HEK293T (cell line): ENCODE measurements at regions of chr5 and their contacts with region 1.

Region 1: DNA sequence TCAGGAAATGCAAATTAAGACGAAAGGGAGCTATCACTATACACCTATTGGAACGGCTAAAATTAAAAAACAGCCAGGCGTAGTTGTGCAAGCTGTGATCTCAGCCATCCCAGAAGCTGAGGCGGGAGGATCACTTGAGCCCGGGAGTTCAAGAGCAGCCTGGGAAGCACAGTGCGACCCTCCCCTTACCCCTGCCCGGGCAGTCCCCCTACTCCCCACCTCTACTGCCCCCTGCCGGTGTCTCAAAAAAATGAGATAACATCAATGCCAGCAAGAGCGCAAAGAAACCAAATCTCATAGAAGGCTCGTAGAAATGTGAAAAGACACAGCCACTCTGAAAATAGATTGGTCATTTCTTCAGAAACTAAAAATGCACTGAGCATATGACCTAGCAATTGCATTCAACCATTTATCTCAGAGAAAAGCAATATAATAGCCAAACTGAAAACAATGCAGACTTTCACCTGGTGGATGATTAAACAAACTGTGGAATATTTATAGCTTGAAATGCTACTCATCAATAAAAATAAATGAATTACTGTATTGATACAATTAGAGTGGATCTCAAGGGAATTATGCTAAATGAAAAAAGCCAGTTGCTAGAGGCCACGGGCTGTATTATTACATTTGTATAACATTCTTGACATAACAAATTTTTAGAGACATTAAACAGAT is 20.6 kb downstream of the OR2V2 start:
- DNase-seq: peak; percentile 70

Region 2: DNA sequence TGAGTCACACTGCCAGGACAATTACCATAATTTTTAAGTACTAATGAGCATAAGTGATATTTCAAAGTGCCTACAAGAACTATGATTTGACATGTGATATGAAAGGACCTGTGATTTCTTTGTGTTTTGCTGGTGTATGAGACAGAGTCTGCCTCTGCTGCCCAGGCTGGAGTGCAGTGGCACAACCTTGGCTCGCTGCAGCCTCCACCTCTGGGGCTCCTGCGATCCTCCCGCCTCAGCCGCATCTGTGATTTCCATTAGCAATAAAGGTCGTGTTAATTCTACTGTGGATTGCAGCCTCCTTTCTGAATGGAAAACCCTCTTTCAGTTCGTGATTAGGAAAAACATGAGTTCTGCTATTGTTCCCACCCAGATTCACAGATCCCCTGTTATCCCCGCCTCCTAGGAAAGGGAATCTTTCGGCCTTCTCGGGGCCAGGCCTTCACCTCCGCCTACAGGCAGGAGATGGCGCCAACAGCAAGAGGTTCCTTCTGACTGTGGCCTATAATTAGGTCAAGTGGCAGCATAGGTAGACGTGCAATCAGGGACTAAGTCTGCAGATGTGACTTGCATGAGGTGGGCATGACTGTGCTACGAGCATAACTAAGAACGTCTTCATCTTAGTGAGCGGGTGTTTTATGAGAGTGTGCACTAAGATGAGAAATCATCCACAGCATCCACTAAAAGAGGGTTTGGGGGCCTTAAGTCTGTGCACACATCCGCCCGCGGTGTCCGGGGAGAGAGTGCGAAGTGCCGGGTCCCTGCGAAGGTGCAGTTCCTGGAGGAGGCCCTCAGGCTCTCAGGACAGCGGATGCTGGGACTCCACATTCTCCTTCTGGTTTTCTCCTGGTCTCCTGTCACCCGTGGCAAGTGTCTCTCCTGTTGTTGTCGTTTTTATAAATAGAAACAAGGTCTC is 14.0 kb after region 1 on chr5:
- CTCF ChIA-PET with region 1: interaction called, 26 read pairs
- POLR2A ChIA-PET with region 1: interaction called, 12 read pairs
- DNase-seq: peak; percentile 64